MCF 10A (cell line): ENCODE measurements at regions of chr20 and their contacts with region 1.

Region 1: GRCh38 chr20:561437-562231 is 18.0 kb upstream of the CSNK2A1 start:
- DNase-seq: peak; percentile 79
- H3K4me3 Mint-ChIP-seq: no peak overlapping the region
- H3K27ac Mint-ChIP-seq: no peak overlapping the region
- H3K4me1 Mint-ChIP-seq: no peaks in the 10 kb centered on the region
- H3K27me3 Mint-ChIP-seq: peaks cover 18% of the 10 kb centered on the region
- CTCF ChIP-seq: peak; percentile 98

Region 2: GRCh38 chr20:528923-529604 is 32.6 kb before region 1 on chr20:
- CTCF ChIA-PET with region 1: no interaction called
- POLR2A ChIA-PET with region 1: no interaction called
- intact Hi-C with region 1: no loop called
- DNase-seq: peak; percentile 90
- H3K4me3 Mint-ChIP-seq: no peak overlapping the region
- H3K27ac Mint-ChIP-seq: peak overlapping the region; percentile 95
- H3K4me1 Mint-ChIP-seq: peaks cover 34% of the 10 kb centered on the region
- H3K27me3 Mint-ChIP-seq: no peaks in the 10 kb centered on the region
- CTCF ChIP-seq: no peak

Region 3: DNA sequence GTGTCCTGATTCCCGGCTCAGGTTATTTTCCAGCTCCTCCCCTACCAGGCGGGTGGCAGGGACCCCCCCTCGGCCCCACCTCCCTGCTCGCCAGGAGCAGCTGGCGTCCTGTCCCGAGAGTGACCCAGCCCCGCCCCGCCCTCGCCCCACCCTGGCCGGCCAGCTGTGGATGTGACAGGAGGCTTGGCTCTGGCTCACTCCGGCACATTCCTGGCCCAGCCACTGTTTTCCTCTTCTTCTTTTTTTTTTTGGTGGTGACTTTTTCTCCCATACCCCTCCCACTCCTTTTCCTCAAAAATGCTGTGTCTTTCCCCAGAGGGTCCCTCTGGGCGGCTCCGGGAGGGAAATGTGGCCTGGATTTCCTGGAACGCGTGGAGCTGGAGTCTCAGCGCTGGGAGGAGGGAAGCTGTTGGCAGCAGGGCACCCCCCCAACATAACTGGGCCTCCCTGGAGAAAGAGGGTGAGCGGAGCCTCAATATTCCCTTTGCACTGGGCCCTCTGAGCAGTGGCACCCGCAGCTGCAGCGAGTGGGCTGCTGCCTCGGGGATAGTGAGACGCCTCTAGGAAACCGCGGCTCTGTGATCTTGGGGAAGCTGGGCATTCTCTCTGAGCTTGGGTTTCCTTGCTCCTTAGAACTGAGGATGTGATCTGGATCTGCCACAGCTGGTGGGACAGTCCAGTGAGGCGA is 10.3 kb after region 1 on chr20:
- CTCF ChIA-PET with region 1: interaction called, 37 read pairs
- POLR2A ChIA-PET with region 1: interaction called, 4 read pairs
- intact Hi-C with region 1: no loop called
- DNase-seq: no peak
- H3K4me3 Mint-ChIP-seq: no peak overlapping the region
- H3K27ac Mint-ChIP-seq: no peak overlapping the region
- H3K4me1 Mint-ChIP-seq: peaks cover 12% of the 10 kb centered on the region
- H3K27me3 Mint-ChIP-seq: peaks cover 59% of the 10 kb centered on the region
- CTCF ChIP-seq: no peak

Region 4: DNA sequence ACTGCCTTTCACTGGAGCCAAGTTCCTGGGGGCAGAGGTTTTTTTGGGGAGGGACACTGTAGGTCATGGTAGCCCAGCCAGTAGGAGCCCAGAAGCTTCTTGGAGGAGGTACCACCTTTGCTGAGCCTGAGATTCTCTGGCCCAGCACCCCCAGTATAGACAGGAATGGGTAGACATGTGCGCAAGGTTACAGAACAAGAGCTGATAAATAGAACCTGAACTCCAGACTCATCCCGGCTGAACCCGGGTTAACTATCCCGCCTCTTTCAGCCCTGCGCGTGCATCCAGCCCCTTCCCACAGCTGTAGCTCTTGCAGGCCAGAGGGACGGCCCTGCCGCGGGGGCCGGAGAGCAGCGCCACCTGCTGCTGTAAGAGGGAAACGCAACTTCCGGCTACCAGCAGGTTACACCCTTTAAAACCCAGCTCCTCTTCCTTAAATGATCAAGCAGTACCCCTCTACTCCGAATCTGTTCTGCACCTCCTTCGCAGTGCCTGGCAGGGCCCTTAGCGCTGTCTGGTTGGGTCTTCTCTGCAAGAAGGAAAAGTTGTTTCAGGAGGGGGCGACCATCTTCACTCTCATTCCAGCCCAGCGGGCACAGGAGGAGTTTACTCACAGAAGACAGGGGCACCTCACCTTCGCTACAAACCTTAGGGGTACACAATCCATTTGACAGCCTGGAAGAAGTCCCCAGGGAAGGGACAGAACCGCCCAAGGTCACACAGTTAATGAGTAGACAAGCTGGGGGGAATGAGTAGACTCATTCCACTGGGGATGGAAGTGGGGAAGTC is 83.9 kb after region 1 on chr20:
- CTCF ChIA-PET with region 1: interaction called, 69 read pairs
- POLR2A ChIA-PET with region 1: no interaction called
- intact Hi-C with region 1: loop called (anchors 1 kb)
- DNase-seq: peak; percentile 58
- H3K4me3 Mint-ChIP-seq: no peak overlapping the region
- H3K27ac Mint-ChIP-seq: no peak overlapping the region
- H3K4me1 Mint-ChIP-seq: peaks cover 5% of the 10 kb centered on the region
- H3K27me3 Mint-ChIP-seq: no peaks in the 10 kb centered on the region
- CTCF ChIP-seq: peak; percentile 91

Region 5: DNA sequence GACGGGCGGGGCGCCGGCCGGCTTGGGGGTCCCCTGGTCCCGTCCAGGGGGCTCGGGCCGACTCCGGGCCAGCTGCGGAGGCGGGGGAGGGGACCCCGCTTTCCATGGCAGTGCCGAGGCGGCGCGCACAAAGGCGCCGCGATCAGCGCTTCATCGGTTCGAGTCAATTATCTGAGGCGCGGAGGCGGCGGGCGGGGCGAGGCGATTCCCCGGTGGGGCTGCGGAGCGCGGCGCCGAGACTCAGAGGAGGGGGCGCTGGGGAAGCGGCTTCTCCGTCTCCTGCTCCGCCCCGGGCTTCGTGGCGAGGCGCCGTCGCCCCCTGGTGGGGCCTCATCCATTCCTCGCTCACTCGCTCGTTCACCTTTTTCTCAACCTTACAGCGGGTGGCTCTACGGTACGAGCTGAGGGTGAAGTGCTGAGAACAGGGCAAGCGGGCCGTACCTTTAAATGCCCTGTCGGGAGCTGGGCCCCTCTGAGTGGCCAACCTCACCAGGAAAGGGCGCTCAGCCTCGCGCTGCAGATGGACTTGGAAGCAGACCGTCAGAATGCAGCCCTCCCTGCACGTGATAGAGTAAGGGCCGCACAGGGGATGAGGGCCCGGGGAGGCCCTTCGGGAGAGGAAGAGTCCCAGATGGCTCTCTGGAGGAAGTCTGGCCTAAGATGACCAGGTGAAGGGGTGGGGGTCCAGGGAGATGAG is 166.8 kb after region 1 on chr20:
- CTCF ChIA-PET with region 1: interaction called, 14 read pairs
- POLR2A ChIA-PET with region 1: interaction called, 3 read pairs
- intact Hi-C with region 1: no loop called
- DNase-seq: no peak
- H3K4me3 Mint-ChIP-seq: no peak overlapping the region
- H3K27ac Mint-ChIP-seq: no peak overlapping the region
- H3K4me1 Mint-ChIP-seq: no peaks in the 10 kb centered on the region
- H3K27me3 Mint-ChIP-seq: peaks cover 52% of the 10 kb centered on the region
- CTCF ChIP-seq: peak; percentile 37

Region 6: DNA sequence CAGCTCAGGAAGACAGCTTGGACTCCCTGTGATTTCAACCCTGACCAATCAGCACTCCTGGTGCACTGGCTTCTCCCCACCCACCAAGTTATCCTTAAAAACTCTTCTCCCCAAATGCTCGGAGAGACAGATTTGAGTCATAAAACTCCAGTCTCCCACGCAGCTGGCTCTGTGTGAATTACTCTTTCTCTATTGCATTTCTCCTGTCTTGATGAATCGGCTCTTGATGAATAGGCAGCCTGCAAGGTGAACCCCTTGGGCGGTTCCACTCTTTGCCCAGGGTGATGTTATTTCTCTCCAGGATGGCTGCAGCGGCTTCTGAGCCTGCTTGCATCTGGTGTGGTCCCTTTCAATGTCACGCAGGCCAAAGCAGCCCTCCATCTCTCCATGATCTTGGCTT is 194.3 kb after region 1 on chr20:
- CTCF ChIA-PET with region 1: interaction called, 10 read pairs
- POLR2A ChIA-PET with region 1: no interaction called
- intact Hi-C with region 1: no loop called
- DNase-seq: no peak
- H3K4me3 Mint-ChIP-seq: no peak overlapping the region
- H3K27ac Mint-ChIP-seq: no peak overlapping the region
- H3K4me1 Mint-ChIP-seq: no peaks in the 10 kb centered on the region
- H3K27me3 Mint-ChIP-seq: peaks cover 30% of the 10 kb centered on the region
- CTCF ChIP-seq: no peak

Region 7: DNA sequence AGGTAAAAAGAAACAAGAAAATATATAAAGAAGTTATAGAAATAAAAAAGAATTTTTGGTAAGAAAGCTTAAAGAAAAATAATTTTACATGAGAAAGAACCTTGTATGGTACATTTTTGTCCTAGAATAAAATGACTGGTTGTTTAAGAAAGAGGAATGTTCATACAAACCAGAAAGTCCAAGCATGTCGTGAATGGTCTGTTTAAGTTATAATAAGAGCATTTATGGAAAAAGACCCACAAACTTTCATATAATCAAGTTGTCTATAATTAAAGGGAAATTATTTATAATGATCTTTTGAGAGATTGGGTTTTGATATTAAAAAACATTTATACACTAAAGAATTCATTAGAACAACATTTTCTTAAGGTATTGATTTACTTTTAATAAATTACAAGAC is 244.1 kb after region 1 on chr20:
- CTCF ChIA-PET with region 1: no interaction called
- POLR2A ChIA-PET with region 1: no interaction called
- intact Hi-C with region 1: no loop called
- DNase-seq: peak; percentile 25
- H3K4me3 Mint-ChIP-seq: no peak overlapping the region
- H3K27ac Mint-ChIP-seq: no peak overlapping the region
- H3K4me1 Mint-ChIP-seq: no peaks in the 10 kb centered on the region
- H3K27me3 Mint-ChIP-seq: peaks cover 15% of the 10 kb centered on the region
- CTCF ChIP-seq: no peak